B cell (primary cell): ENCODE measurements at regions of chr12 and their contacts with region 1.

Region 1: GRCh38 chr12:111405149-111405860 is 418 bp upstream of the SH2B3 start:
- DNase-seq: peak; percentile 100
- ATAC-seq: peak; percentile 71
- H3K4me3 ChIP-seq: peak overlapping the region in 4 of 5 experiments; percentile 57 to 94 (median 60)
- H3K4me3 Mint-ChIP-seq: peak overlapping the region; percentile 85
- H3K27ac ChIP-seq: peak overlapping the region; percentile 73 to 97
- H3K27ac Mint-ChIP-seq: peak overlapping the region; percentile 92
- H3K4me1 ChIP-seq: peaks cover 58 to 67% of the 10 kb centered on the region in 2 donors
- H3K4me1 Mint-ChIP-seq: peaks cover 58% of the 10 kb centered on the region
- H3K27me3 ChIP-seq: no peaks in the 10 kb centered on the region
- H3K27me3 Mint-ChIP-seq: no peaks in the 10 kb centered on the region
- CTCF ChIP-seq: peak; percentile 81

Region 2: GRCh38 chr12:110742718-110743570 is 662.4 kb before region 1 on chr12 and contains the start of gene PPP1CC:
- CTCF ChIA-PET with region 1: no interaction called
- POLR2A ChIA-PET with region 1: no interaction called
- intact Hi-C with region 1: no loop called
- DNase-seq: peak; percentile 97
- ATAC-seq: peak; percentile 95
- H3K4me3 ChIP-seq: peak within 1 kb of the TSS; percentile 86 to 94 (median 92)
- H3K4me3 Mint-ChIP-seq: peak within 1 kb of the TSS; percentile 99
- H3K27ac ChIP-seq: peak within 1 kb of the TSS; percentile 31 to 78
- H3K27ac Mint-ChIP-seq: peak within 1 kb of the TSS; percentile 95
- H3K4me1 ChIP-seq: peaks cover 32 to 36% of the 10 kb centered on the region in 2 donors
- H3K4me1 Mint-ChIP-seq: peaks cover 40% of the 10 kb centered on the region
- H3K27me3 ChIP-seq: no peaks in the 10 kb centered on the region
- H3K27me3 Mint-ChIP-seq: no peaks in the 10 kb centered on the region
- CTCF ChIP-seq: no peak
- total RNA-seq, gene PPP1CC: 146 and 150 TPM in 2 replicates

Region 3: DNA sequence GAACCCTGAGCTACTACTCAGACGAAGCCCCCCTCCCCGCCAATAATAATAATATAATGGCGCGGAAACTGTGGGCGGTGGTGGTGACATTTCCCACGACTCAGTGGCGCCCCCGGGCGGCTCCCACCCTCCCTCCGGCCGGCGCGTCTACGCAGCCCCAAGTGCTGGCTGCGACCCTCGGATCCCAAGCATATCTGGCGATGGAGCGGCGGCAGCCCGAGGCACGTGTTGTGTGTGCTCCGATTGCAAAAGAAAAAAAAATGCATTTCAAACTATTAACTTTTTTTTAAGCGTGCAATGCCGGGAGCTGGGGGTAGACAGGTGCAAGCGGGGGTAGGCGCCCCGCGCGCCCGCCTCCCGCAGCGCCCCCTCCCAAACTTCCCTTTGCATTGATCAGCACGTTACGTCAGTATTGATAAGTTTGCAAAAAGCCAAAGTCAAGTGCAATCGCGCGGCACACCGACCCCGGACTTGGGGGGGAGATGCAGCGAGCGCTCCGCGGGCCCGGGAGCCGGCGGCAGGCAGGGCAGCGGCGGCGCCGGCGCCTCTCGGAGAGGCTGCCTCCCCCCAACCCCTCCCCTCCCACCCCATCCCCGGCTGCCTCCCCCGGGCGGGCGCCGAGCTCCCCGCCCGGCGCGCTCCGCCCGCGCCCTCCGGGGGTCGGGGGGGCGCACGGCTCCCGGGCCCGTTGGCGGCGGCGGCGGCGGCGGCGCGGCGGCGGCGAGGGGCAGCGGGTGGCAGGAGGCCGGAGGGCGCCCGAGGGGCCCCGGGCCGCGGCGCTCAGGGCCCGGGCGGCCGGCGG is 371.8 kb before region 1 on chr12:
- CTCF ChIA-PET with region 1: no interaction called
- POLR2A ChIA-PET with region 1: no interaction called
- intact Hi-C with region 1: no loop called
- DNase-seq: no peak
- ATAC-seq: no peak
- H3K4me3 ChIP-seq: no peak overlapping the region
- H3K4me3 Mint-ChIP-seq: no peak overlapping the region
- H3K27ac ChIP-seq: no peak overlapping the region
- H3K27ac Mint-ChIP-seq: no peak overlapping the region
- H3K4me1 ChIP-seq: peaks cover 18 to 22% of the 10 kb centered on the region in 2 donors
- H3K4me1 Mint-ChIP-seq: peaks cover 18% of the 10 kb centered on the region
- H3K27me3 ChIP-seq: peaks cover 0 to 67% (median 38%) of the 10 kb centered on the region in 4 experiments
- H3K27me3 Mint-ChIP-seq: peaks cover 68% of the 10 kb centered on the region
- CTCF ChIP-seq: no peak

Region 4: DNA sequence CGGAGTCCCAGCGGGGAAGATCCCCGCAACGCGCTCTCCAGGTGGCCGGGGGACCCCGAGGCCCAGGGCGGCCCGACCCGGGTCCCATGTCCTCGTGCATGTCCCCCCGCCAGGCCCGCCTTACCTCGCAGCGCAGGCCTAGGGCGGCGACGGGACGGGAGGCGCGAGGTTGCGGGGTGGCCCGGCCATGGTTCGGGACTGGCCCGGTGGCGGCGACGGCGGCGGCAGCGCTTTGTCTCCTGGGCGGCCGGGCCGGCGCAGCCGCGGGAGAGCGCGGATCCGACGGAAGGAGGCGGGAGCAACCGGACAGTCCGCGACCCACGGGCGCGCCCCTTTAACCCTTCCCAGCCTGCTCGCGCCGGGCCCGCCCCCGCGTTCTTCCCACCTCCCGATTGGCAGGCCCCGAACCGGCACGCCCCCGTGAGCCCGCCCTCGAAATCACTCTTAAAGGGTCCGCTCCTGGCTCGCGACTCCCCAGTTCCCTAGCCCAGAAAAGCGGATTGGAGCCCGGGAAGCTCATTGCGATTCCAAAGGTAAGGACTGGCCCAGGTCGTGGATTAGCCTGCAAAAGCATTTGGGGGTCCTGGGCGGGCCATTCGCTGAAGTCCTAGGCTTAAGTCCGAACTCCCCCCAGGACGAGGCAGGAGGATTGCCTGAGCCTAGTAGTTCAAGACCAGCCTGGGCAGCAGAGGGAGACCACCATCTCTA is 36.4 kb before region 1 on chr12 and contains the start of gene PHETA1:
- CTCF ChIA-PET with region 1: interaction called, 3 read pairs
- POLR2A ChIA-PET with region 1: no interaction called
- intact Hi-C with region 1: loop called (anchors 2 kb)
- DNase-seq: peak; percentile 78
- ATAC-seq: peak; percentile 98
- H3K4me3 ChIP-seq: peak within 1 kb of the TSS; percentile 46 to 73 (median 70)
- H3K4me3 Mint-ChIP-seq: peak within 1 kb of the TSS; percentile 90
- H3K27ac ChIP-seq: peak within 1 kb of the TSS; percentile 3 to 54
- H3K27ac Mint-ChIP-seq: peak within 1 kb of the TSS; percentile 72
- H3K4me1 ChIP-seq: peaks cover 20 to 25% of the 10 kb centered on the region in 2 donors
- H3K4me1 Mint-ChIP-seq: peaks cover 35% of the 10 kb centered on the region
- H3K27me3 ChIP-seq: no peaks in the 10 kb centered on the region
- H3K27me3 Mint-ChIP-seq: no peaks in the 10 kb centered on the region
- CTCF ChIP-seq: no peak
- total RNA-seq, gene PHETA1: 9.4 and 12.1 TPM in 2 replicates

Region 5: GRCh38 chr12:111434680-111435338 is 29.5 kb after region 1 on chr12:
- CTCF ChIA-PET with region 1: interaction called, 1,472 read pairs
- POLR2A ChIA-PET with region 1: interaction called, 36 read pairs
- intact Hi-C with region 1: loop called (anchors 1 kb)
- DNase-seq: peak; percentile 92
- ATAC-seq: peak; percentile 76
- H3K4me3 ChIP-seq: peak overlapping the region; percentile 5 to 65 (median 43)
- H3K4me3 Mint-ChIP-seq: peak overlapping the region; percentile 92
- H3K27ac ChIP-seq: peak overlapping the region; percentile 96 to 97
- H3K27ac Mint-ChIP-seq: peak overlapping the region; percentile 99
- H3K4me1 ChIP-seq: peaks cover 88 to 98% of the 10 kb centered on the region in 2 donors
- H3K4me1 Mint-ChIP-seq: peaks cover 90% of the 10 kb centered on the region
- H3K27me3 ChIP-seq: no peaks in the 10 kb centered on the region
- H3K27me3 Mint-ChIP-seq: no peaks in the 10 kb centered on the region
- CTCF ChIP-seq: no peak

Region 6: GRCh38 chr12:111529424-111530368 is 124.4 kb after region 1 on chr12:
- CTCF ChIA-PET with region 1: interaction called, 162 read pairs
- POLR2A ChIA-PET with region 1: no interaction called
- intact Hi-C with region 1: no loop called
- DNase-seq: peak; percentile 78
- ATAC-seq: peak; percentile 76
- H3K4me3 ChIP-seq: no peak overlapping the region
- H3K4me3 Mint-ChIP-seq: no peak overlapping the region
- H3K27ac ChIP-seq: no peak overlapping the region
- H3K27ac Mint-ChIP-seq: no peak overlapping the region
- H3K4me1 ChIP-seq: no peaks in the 10 kb centered on the region
- H3K4me1 Mint-ChIP-seq: no peaks in the 10 kb centered on the region
- H3K27me3 ChIP-seq: no peaks in the 10 kb centered on the region
- H3K27me3 Mint-ChIP-seq: no peaks in the 10 kb centered on the region
- CTCF ChIP-seq: peak; percentile 85

Region 7: DNA sequence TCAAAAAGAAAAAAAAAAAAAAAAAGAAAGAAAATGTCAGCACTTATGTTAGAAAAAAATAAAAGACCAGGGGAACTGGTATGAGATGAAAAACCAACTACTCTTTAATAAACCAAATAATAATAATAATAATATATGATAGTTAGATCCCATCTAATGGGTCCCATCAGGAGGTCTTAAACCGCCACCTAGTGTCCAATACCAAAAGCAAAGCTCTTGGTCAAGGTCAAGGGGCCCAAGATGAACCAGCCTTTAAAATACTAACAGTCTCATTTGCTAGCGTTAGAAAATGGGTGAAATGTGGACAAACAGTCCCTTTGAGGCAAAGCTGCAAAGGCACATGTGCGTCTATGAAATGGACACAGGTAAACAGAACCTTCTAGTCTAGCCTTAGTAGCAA is 268.2 kb after region 1 on chr12:
- CTCF ChIA-PET with region 1: no interaction called
- POLR2A ChIA-PET with region 1: no interaction called
- intact Hi-C with region 1: no loop called
- DNase-seq: no peak
- ATAC-seq: no peak
- H3K4me3 ChIP-seq: no peak overlapping the region
- H3K4me3 Mint-ChIP-seq: no peak overlapping the region
- H3K27ac ChIP-seq: no peak overlapping the region
- H3K27ac Mint-ChIP-seq: no peak overlapping the region
- H3K4me1 ChIP-seq: no peaks in the 10 kb centered on the region
- H3K4me1 Mint-ChIP-seq: no peaks in the 10 kb centered on the region
- H3K27me3 ChIP-seq: no peaks in the 10 kb centered on the region
- H3K27me3 Mint-ChIP-seq: no peaks in the 10 kb centered on the region
- CTCF ChIP-seq: no peak